Activated T-helper 1 cell treated with anti-CD3 and anti-CD28 coated beads, Interleukin-12 subunit alpha, Interleukin-12 subunit beta, Interleukin-2, Interleukin-4 antibody, amounts not matched to agents 30 ng/mL and 10 ng/mL and 1 ng/mL, durations not matched to agents 14 hours and 24 hours and 36 hours (primary cell): ENCODE measurements at regions of chr1 and their contacts with region 1.

Region 1: GRCh38 chr1:224113918-224114786 is at the start of gene FBXO28:
- DNase-seq: peak; percentile 90
- H3K4me3 Mint-ChIP-seq: peak within 1 kb of the TSS; percentile 91
- H3K27ac Mint-ChIP-seq: peak within 1 kb of the TSS; percentile 89
- H3K4me1 Mint-ChIP-seq: peaks cover 27% of the 10 kb centered on the region
- H3K27me3 Mint-ChIP-seq: peaks cover 19% of the 10 kb centered on the region
- total RNA-seq, gene FBXO28: 29.3 and 32.2 TPM in 2 replicates

Region 2: DNA sequence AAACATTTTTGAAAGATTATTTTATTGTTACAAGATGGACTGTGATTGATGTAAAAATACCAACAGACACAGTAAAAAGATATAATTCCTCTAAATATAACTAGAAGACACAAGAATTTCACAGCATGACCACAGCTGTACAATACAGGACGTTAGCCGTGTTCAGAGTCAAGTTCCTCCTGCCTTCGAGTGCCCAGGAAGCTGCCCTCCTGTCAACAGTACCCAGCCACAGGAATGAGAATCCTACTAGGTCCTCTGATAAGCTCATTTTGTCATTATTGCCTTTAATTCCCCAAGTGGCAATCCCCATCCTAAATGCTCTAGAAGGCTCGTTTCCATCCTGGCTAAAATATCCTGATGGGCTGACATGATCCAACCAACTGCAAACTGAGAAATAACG is 418.2 kb before region 1 on chr1:
- intact Hi-C with region 1: loop called (anchors 5 kb)
- DNase-seq: no peak
- H3K4me3 Mint-ChIP-seq: no peak overlapping the region
- H3K27ac Mint-ChIP-seq: no peak overlapping the region
- H3K4me1 Mint-ChIP-seq: peaks cover 17% of the 10 kb centered on the region
- H3K27me3 Mint-ChIP-seq: peaks cover 11% of the 10 kb centered on the region

Region 3: GRCh38 chr1:223845810-223846682 is 268.1 kb before region 1 on chr1 and contains the start of gene TP53BP2:
- intact Hi-C with region 1: loop called (anchors 5 kb)
- DNase-seq: peak; percentile 81
- H3K4me3 Mint-ChIP-seq: peak within 1 kb of the TSS; percentile 95
- H3K27ac Mint-ChIP-seq: peak within 1 kb of the TSS; percentile 96
- H3K4me1 Mint-ChIP-seq: peaks cover 42% of the 10 kb centered on the region
- H3K27me3 Mint-ChIP-seq: peaks cover 5% of the 10 kb centered on the region
- total RNA-seq, gene TP53BP2: 40.4 and 47.2 TPM in 2 replicates

Region 4: DNA sequence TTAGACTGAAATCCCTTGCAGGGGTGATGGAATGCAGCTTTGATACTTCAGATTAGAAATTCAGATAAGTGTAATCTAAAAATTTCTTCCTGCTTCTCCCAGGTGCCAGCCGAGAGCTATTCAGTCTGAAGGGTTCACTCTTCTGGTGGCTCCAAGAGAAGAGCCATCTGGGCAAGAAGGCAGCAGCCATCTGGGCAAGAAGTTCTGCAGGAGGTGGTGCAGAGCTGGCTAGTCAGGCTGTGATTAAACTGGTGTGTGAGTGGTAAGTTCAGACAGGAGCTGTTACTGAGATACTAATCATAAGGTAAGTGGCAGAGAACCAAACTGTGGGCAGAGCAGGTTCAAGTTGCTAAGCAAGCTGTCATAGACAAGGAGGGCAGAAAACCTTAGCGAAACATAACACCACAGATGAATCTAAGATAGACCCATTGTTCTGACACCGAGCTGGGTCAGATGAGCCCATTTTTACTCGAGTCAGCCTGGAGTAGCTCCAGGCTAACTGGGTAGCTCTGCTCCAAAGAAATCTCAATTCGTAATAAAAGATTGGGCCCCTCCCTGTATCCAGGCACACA is 254.0 kb before region 1 on chr1:
- intact Hi-C with region 1: no loop called
- DNase-seq: no peak
- H3K4me3 Mint-ChIP-seq: no peak overlapping the region
- H3K27ac Mint-ChIP-seq: no peak overlapping the region
- H3K4me1 Mint-ChIP-seq: no peaks in the 10 kb centered on the region
- H3K27me3 Mint-ChIP-seq: peaks cover 21% of the 10 kb centered on the region

Region 5: GRCh38 chr1:224182866-224183590 is 68.9 kb after region 1 on chr1 and contains the start of gene DEGS1:
- intact Hi-C with region 1: loop called (anchors 1 kb)
- DNase-seq: peak; percentile 80
- H3K4me3 Mint-ChIP-seq: peak within 1 kb of the TSS; percentile 96
- H3K27ac Mint-ChIP-seq: peak within 1 kb of the TSS; percentile 93
- H3K4me1 Mint-ChIP-seq: peaks cover 46% of the 10 kb centered on the region
- H3K27me3 Mint-ChIP-seq: peaks cover 3% of the 10 kb centered on the region
- total RNA-seq, gene DEGS1: 54.7 and 57.1 TPM in 2 replicates

Region 6: GRCh38 chr1:224287714-224288113 is 173.6 kb after region 1 on chr1:
- intact Hi-C with region 1: no loop called
- DNase-seq: no peak
- H3K4me3 Mint-ChIP-seq: no peak overlapping the region
- H3K27ac Mint-ChIP-seq: no peak overlapping the region
- H3K4me1 Mint-ChIP-seq: no peaks in the 10 kb centered on the region
- H3K27me3 Mint-ChIP-seq: no peaks in the 10 kb centered on the region

Region 7: GRCh38 chr1:224356685-224357625 is 242.8 kb after region 1 on chr1 and contains the start of gene CNIH4:
- intact Hi-C with region 1: loop called (anchors 1 kb)
- DNase-seq: peak; percentile 89
- H3K4me3 Mint-ChIP-seq: peak within 1 kb of the TSS; percentile 93
- H3K27ac Mint-ChIP-seq: peak within 1 kb of the TSS; percentile 93
- H3K4me1 Mint-ChIP-seq: peaks cover 28% of the 10 kb centered on the region
- H3K27me3 Mint-ChIP-seq: no peaks in the 10 kb centered on the region
- total RNA-seq, gene CNIH4: 80.7 and 82.3 TPM in 2 replicates

Region 8: GRCh38 chr1:226083302-226084101 is 1969.3 kb after region 1 on chr1:
- intact Hi-C with region 1: loop called (anchors 2 kb)
- DNase-seq: peak; percentile 91
- H3K4me3 Mint-ChIP-seq: peak overlapping the region; percentile 89
- H3K27ac Mint-ChIP-seq: peak overlapping the region; percentile 79
- H3K4me1 Mint-ChIP-seq: peaks cover 12% of the 10 kb centered on the region
- H3K27me3 Mint-ChIP-seq: peaks cover 15% of the 10 kb centered on the region